Right lobe of liver (tissue), 6 donors: ENCODE measurements at regions of chr9 and their contacts with region 1.

Region 1: DNA sequence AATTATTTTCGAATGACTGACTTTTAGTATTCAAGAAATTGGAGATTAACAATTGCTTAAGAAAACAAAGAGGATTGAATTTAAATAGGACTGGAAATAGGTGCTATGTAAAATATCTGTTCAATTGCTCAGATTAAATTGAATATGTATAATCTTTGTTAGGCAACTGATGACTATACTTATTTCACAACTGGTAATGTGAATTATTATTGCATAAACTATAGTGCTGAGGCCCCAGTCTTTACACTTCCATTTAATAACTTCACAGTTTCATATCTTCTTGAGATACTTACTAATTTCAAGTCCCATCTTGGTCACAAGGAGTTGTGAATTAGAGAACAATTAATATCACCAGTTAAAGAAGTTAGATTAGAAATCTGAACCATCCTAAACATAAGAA is 16.7 kb downstream of the CEP78 start:
- DNase-seq: no peak
- ATAC-seq: no peak
- H3K4me3 ChIP-seq: no peak overlapping the region
- H3K27ac ChIP-seq: no peak overlapping the region
- H3K4me1 ChIP-seq: peaks cover 0 to 8% (median 0%) of the 10 kb centered on the region in 4 donors
- H3K27me3 ChIP-seq: no peaks in the 10 kb centered on the region
- CTCF ChIP-seq: no peak
- POLR2A ChIP-seq: no peak

Region 2: GRCh38 chr9:78213712-78214111 is 38.9 kb before region 1 on chr9:
- intact Hi-C with region 1: no loop called
- DNase-seq: no peak
- ATAC-seq: peak in 3 of 4 donors; percentile 32 to 72 (median 65)
- H3K4me3 ChIP-seq: no peak overlapping the region
- H3K27ac ChIP-seq: no peak overlapping the region
- H3K4me1 ChIP-seq: no peaks in the 10 kb centered on the region
- H3K27me3 ChIP-seq: no peaks in the 10 kb centered on the region
- CTCF ChIP-seq: peak in 3 of 4 donors; percentile 22 to 24 (median 24)
- POLR2A ChIP-seq: no peak

Region 3: DNA sequence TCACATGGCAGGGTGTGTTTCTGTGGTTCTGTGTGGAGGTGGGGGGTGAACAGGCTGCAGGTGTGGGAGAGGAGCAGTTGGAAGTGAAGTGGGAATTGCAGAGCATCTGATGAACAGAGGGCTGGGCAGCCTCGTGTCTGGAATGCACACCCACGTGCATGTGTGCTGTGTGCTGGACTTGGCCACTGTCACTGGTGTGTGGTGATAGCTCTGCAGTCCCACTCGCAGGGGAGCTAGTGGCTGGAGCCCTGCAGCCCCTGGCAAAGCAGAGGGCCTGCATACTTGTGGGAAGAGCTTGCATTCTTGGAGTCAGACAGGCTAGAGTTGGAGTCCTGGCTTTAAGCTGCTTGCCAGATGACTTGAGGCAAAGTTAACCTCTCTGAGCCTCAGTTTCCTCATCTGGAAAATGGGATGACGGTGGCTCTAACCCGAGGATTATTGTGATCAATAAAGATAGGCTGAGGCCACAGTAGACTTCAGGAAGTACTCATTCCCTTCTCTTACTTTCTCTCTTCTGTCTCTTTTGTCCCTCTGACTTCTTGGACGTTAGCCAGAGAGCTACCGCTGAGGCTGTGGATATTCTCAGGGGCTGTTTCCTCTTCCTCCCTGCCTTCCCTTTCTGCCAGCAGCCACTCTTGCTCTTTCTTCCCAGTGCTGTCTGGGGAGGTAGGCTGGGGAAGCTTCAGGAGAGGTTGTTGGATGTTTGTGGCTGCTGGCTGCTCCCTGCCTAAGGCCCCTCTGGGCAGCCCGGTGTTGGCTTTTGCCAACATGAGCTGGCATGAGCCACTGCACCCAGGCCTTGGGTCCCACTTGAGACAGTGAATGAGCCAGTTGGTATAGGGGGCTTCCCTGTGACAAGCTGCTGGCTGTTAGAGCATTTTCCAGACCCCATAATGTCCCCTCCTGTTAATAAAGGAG is 62.6 kb after region 1 on chr9:
- intact Hi-C with region 1: loop called in 1 of 2 experiments (anchors 10 kb)
- DNase-seq: no peak
- ATAC-seq: peak in 1 of 4 donors; percentile 27
- H3K4me3 ChIP-seq: no peak overlapping the region
- H3K27ac ChIP-seq: no peak overlapping the region
- H3K4me1 ChIP-seq: no peaks in the 10 kb centered on the region
- H3K27me3 ChIP-seq: no peaks in the 10 kb centered on the region
- CTCF ChIP-seq: no peak
- POLR2A ChIP-seq: no peak

Region 4: GRCh38 chr9:78369639-78370219 is 117.1 kb after region 1 on chr9:
- intact Hi-C with region 1: loop called in 1 of 2 experiments (anchors 10 kb)
- DNase-seq: peak; percentile 75 to 77 (median 75)
- ATAC-seq: peak; percentile 87 to 89 (median 88)
- H3K4me3 ChIP-seq: no peak overlapping the region
- H3K27ac ChIP-seq: no peak overlapping the region
- H3K4me1 ChIP-seq: no peaks in the 10 kb centered on the region
- H3K27me3 ChIP-seq: no peaks in the 10 kb centered on the region
- CTCF ChIP-seq: peak; percentile 69 to 88 (median 83)
- POLR2A ChIP-seq: no peak